GM12878 (cell line): ENCODE measurements at regions of chr4 and their contacts with region 1.

Region 1: DNA sequence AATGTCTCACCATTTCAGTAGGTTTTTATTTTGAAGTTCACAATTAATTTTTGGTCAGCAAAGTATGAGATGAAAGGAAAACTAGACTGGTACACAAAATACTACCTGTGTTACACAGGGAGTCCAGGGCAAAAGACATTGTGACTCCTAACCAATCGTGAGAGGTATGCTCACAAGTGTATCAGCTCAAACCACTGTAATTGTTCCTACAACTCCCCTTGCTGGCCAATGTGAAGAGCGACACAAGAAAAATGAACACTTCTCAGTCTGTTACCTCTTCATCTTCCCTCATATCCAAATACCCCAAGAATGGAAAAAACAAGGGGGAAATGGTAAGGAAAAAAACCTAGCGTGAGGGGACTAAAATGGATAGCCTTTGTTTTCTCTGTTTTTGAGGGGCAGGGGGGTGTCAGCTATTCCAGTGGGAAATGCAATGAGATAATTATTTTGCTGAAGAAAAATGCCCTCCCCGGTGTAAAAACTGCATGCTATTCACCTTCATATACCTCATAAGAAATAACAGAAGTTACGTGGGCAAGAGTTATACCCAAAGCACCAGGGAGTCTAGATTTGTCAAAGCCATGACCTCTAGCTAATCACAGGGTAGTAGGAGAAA is 30.6 kb upstream of the NSUN7 start:
- DNase-seq: peak; percentile 71
- ATAC-seq: peak; percentile 88
- H3K4me3 ChIP-seq: no peak overlapping the region
- H3K27ac ChIP-seq: no peak overlapping the region
- H3K4me1 ChIP-seq: peaks cover 26% of the 10 kb centered on the region
- H3K27me3 ChIP-seq: no peaks in the 10 kb centered on the region
- CTCF ChIP-seq: peak; percentile 73 to 91 (median 87)
- EP300 ChIP-seq: no peak
- POLR2A ChIP-seq: no peak
- RAD21 ChIP-seq: peak; percentile 95

Region 2: DNA sequence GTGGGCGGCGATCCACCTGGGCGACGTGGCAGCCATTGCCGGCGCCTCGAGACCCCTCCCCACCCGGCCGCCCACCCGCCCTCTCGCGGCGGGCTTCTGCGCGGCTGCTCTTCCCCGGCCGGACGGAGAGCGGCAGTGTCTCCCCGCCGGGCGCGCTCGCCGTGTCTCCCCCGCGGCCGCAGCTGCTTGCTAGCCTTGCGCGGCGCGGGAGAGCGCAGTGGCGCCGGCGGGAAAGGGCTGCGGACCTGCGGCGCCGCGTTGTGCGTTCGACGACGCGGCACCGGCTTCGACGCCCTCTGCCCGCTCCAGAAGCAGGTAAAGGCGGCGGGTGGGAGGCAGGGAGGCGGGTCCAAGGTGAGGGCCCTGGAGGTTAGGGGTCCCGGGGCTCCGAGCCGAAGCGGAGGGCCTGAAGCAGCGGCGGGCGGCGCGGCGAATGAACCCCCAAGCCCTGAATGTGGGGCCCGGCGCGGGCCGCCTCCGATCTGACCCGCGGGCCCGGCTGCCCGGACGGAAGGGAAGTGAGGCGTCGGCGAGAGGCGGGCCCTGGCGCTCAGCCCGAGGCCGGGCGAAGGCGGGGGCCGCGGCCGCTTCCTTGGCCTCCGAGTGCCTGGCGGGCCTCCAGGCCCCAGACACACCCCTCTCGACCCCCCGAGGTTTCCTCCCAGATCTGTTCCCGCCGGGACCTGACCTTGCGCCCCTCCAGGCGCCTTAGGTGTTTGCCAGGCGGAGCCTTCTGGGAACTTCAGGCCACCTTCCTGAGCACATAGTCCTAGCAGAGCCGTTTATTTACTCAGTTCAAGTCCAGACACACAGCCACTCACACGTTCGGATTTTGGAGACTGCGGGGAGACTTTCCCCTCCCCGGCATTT is 662.2 kb before region 1 on chr4 and contains the start of gene N4BP2:
- CTCF ChIA-PET with region 1: interaction called, 6 read pairs
- POLR2A ChIA-PET with region 1: interaction called, 3 read pairs
- RAD21 ChIA-PET with region 1: interaction called, 6 read pairs
- SMC1A ChIA-PET with region 1: interaction called, 3 read pairs
- in situ Hi-C with region 1: no loop called
- intact Hi-C with region 1: loop called (anchors 2 kb)
- DNase-seq: peak; percentile 5
- ATAC-seq: peak; percentile 80
- H3K4me3 ChIP-seq: peak within 1 kb of the TSS; percentile 83
- H3K27ac ChIP-seq: peak within 1 kb of the TSS; percentile 80
- H3K4me1 ChIP-seq: peaks cover 10% of the 10 kb centered on the region
- H3K27me3 ChIP-seq: no peaks in the 10 kb centered on the region
- CTCF ChIP-seq: peak; percentile 73 to 97 (median 78)
- EP300 ChIP-seq: no peak
- POLR2A ChIP-seq: peak; percentile 80
- RAD21 ChIP-seq: peak; percentile 80
- polyA plus RNA-seq, gene N4BP2: 2.3 to 3.6 TPM

Region 3: GRCh38 chr4:40316782-40317635 is 402.1 kb before region 1 on chr4:
- CTCF ChIA-PET with region 1: interaction called, 21 read pairs
- POLR2A ChIA-PET with region 1: no interaction called
- RAD21 ChIA-PET with region 1: interaction called, 9 read pairs
- SMC1A ChIA-PET with region 1: interaction called, 17 read pairs
- in situ Hi-C with region 1: no loop called
- intact Hi-C with region 1: loop called (anchors 5 kb)
- DNase-seq: peak; percentile 78
- ATAC-seq: peak; percentile 86
- H3K4me3 ChIP-seq: peak overlapping the region; percentile 62
- H3K27ac ChIP-seq: peak overlapping the region; percentile 75
- H3K4me1 ChIP-seq: peaks cover 10% of the 10 kb centered on the region
- H3K27me3 ChIP-seq: no peaks in the 10 kb centered on the region
- CTCF ChIP-seq: peak; percentile 75 to 88 (median 82)
- EP300 ChIP-seq: no peak
- POLR2A ChIP-seq: 0 out of 2 replicates have a peak, but pooled peaks have one; percentile 32
- RAD21 ChIP-seq: peak; percentile 74

Region 4: DNA sequence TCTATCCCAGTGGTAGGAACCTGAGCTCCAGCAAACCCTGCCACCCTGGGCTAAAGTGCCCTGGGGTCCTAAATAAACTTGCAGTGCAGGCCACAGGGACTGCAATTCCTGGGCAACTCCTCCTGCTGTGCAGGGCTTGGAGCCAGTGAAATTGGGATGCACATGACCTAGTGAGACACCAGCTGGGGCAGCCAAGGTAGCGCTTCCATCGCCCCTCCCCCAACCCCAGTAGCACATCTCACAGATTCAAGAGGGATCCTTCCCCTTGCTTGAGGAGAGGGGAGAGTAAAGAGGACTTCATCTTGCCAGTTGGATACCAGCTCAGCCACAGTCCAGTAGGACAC is 339.8 kb before region 1 on chr4:
- CTCF ChIA-PET with region 1: no interaction called
- POLR2A ChIA-PET with region 1: no interaction called
- RAD21 ChIA-PET with region 1: no interaction called
- SMC1A ChIA-PET with region 1: no interaction called
- in situ Hi-C with region 1: no loop called
- intact Hi-C with region 1: no loop called
- DNase-seq: no peak
- ATAC-seq: no peak
- H3K4me3 ChIP-seq: no peak overlapping the region
- H3K27ac ChIP-seq: no peak overlapping the region
- H3K4me1 ChIP-seq: no peaks in the 10 kb centered on the region
- H3K27me3 ChIP-seq: no peaks in the 10 kb centered on the region
- CTCF ChIP-seq: no peak
- EP300 ChIP-seq: no peak
- POLR2A ChIP-seq: no peak
- RAD21 ChIP-seq: no peak

Region 5: GRCh38 chr4:40438384-40439026 is 280.6 kb before region 1 on chr4:
- CTCF ChIA-PET with region 1: no interaction called
- POLR2A ChIA-PET with region 1: no interaction called
- RAD21 ChIA-PET with region 1: interaction called, 4 read pairs
- SMC1A ChIA-PET with region 1: interaction called, 10 read pairs
- in situ Hi-C with region 1: no loop called
- intact Hi-C with region 1: loop called (anchors 2 kb)
- DNase-seq: no peak
- ATAC-seq: no peak
- H3K4me3 ChIP-seq: no peak overlapping the region
- H3K27ac ChIP-seq: no peak overlapping the region
- H3K4me1 ChIP-seq: peaks cover 11% of the 10 kb centered on the region
- H3K27me3 ChIP-seq: no peaks in the 10 kb centered on the region
- CTCF ChIP-seq: no peak
- EP300 ChIP-seq: no peak
- POLR2A ChIP-seq: no peak
- RAD21 ChIP-seq: no peak

Region 6: GRCh38 chr4:40576631-40577480 is 142.3 kb before region 1 on chr4:
- CTCF ChIA-PET with region 1: interaction called, 16 read pairs
- POLR2A ChIA-PET with region 1: no interaction called
- RAD21 ChIA-PET with region 1: interaction called, 18 read pairs
- SMC1A ChIA-PET with region 1: interaction called, 60 read pairs
- in situ Hi-C with region 1: no loop called
- intact Hi-C with region 1: loop called (anchors 10 kb)
- DNase-seq: peak; percentile 82
- ATAC-seq: peak; percentile 80
- H3K4me3 ChIP-seq: peak overlapping the region; percentile 35
- H3K27ac ChIP-seq: peak overlapping the region; percentile 89
- H3K4me1 ChIP-seq: peaks cover 57% of the 10 kb centered on the region
- H3K27me3 ChIP-seq: no peaks in the 10 kb centered on the region
- CTCF ChIP-seq: no peak
- EP300 ChIP-seq: peak in 1 of 2 experiments; percentile 63; a peak in 2 of 4 replicates
- POLR2A ChIP-seq: no peak
- RAD21 ChIP-seq: no peak

Region 7: GRCh38 chr4:40662962-40663604 is 56.0 kb before region 1 on chr4:
- CTCF ChIA-PET with region 1: interaction called, 6 read pairs
- POLR2A ChIA-PET with region 1: no interaction called
- RAD21 ChIA-PET with region 1: interaction called, 4 read pairs
- SMC1A ChIA-PET with region 1: interaction called, 13 read pairs
- in situ Hi-C with region 1: no loop called
- intact Hi-C with region 1: no loop called
- DNase-seq: peak; percentile 82
- ATAC-seq: peak; percentile 85
- H3K4me3 ChIP-seq: peak overlapping the region; percentile 28; the same call in 1 of the 2 replicates
- H3K27ac ChIP-seq: peak overlapping the region; percentile 66
- H3K4me1 ChIP-seq: peaks cover 19% of the 10 kb centered on the region
- H3K27me3 ChIP-seq: no peaks in the 10 kb centered on the region
- CTCF ChIP-seq: no peak
- EP300 ChIP-seq: 0 out of 4 replicates have a peak, but pooled peaks of 1 of the 2 experiments have one; percentile 35
- POLR2A ChIP-seq: no peak
- RAD21 ChIP-seq: 0 out of 2 replicates have a peak, but pooled peaks have one; percentile 6

Region 8: GRCh38 chr4:40731792-40732245 is 12.7 kb after region 1 on chr4:
- CTCF ChIA-PET with region 1: interaction called, 12 read pairs
- POLR2A ChIA-PET with region 1: no interaction called
- RAD21 ChIA-PET with region 1: interaction called, 11 read pairs
- SMC1A ChIA-PET with region 1: interaction called, 15 read pairs
- in situ Hi-C with region 1: no loop called
- intact Hi-C with region 1: no loop called
- DNase-seq: no peak
- ATAC-seq: peak; percentile 24; the same call in 2 of the 3 replicates
- H3K4me3 ChIP-seq: no peak overlapping the region
- H3K27ac ChIP-seq: no peak overlapping the region
- H3K4me1 ChIP-seq: 0 out of 2 replicates have a peak, but pooled peaks cover 3% of the 10 kb centered on the region
- H3K27me3 ChIP-seq: no peaks in the 10 kb centered on the region
- CTCF ChIP-seq: no peak
- EP300 ChIP-seq: no peak
- POLR2A ChIP-seq: no peak
- RAD21 ChIP-seq: no peak

Region 9: GRCh38 chr4:40897557-40898203 is 178.6 kb after region 1 on chr4:
- CTCF ChIA-PET with region 1: no interaction called
- POLR2A ChIA-PET with region 1: no interaction called
- RAD21 ChIA-PET with region 1: no interaction called
- SMC1A ChIA-PET with region 1: no interaction called
- in situ Hi-C with region 1: no loop called
- intact Hi-C with region 1: no loop called
- DNase-seq: no peak
- ATAC-seq: peak; percentile 95
- H3K4me3 ChIP-seq: 0 out of 2 replicates have a peak overlapping the region, but pooled peaks have one; percentile 34
- H3K27ac ChIP-seq: no peak overlapping the region
- H3K4me1 ChIP-seq: no peaks in the 10 kb centered on the region
- H3K27me3 ChIP-seq: no peaks in the 10 kb centered on the region
- CTCF ChIP-seq: peak; percentile 74 to 89 (median 82)
- EP300 ChIP-seq: no peak
- POLR2A ChIP-seq: no peak
- RAD21 ChIP-seq: peak; percentile 68